ENCODE measurements at regions of chr13 and their contacts with region 1.

Region 1: GRCh38 chr13:76879203-76879882 is 6.9 kb downstream of the KCTD12 start:
- DNase-seq: peak; percentile 74
- H3K4me3 Mint-ChIP-seq: peak overlapping the region; percentile 45
- H3K27ac Mint-ChIP-seq: peak overlapping the region; percentile 78
- H3K4me1 Mint-ChIP-seq: peaks cover 34% of the 10 kb centered on the region
- H3K27me3 Mint-ChIP-seq: peaks cover 9% of the 10 kb centered on the region

Region 2: GRCh38 chr13:76799696-76800095 is 79.6 kb before region 1 on chr13:
- CTCF ChIA-PET with region 1: no interaction called
- POLR2A ChIA-PET with region 1: no interaction called
- DNase-seq: no peak
- H3K4me3 Mint-ChIP-seq: no peak overlapping the region
- H3K27ac Mint-ChIP-seq: no peak overlapping the region
- H3K4me1 Mint-ChIP-seq: no peaks in the 10 kb centered on the region
- H3K27me3 Mint-ChIP-seq: peaks cover 2% of the 10 kb centered on the region

Region 3: GRCh38 chr13:76903544-76904162 is 24.3 kb after region 1 on chr13:
- CTCF ChIA-PET with region 1: interaction called, 19 read pairs
- POLR2A ChIA-PET with region 1: interaction called, 4 read pairs
- DNase-seq: peak; percentile 73
- H3K4me3 Mint-ChIP-seq: no peak overlapping the region
- H3K27ac Mint-ChIP-seq: no peak overlapping the region
- H3K4me1 Mint-ChIP-seq: no peaks in the 10 kb centered on the region
- H3K27me3 Mint-ChIP-seq: peaks cover 31% of the 10 kb centered on the region

Measured in activated CD4-positive, alpha-beta memory T cell treated with anti-CD3 and anti-CD28 coated beads, Interleukin-2, amount 10 ng/mL, durations not matched to agents 7 days and 5 days (primary cell).